Activated CD4-positive, alpha-beta memory T cell treated with anti-CD3 and anti-CD28 coated beads for 36 hours (primary cell): ENCODE measurements at regions of chr11 and their contacts with region 1.

Region 1: GRCh38 chr11:108467091-108467823 is at the start of gene C11orf65:
- DNase-seq: peak; percentile 97
- H3K4me3 Mint-ChIP-seq: peak within 1 kb of the TSS; percentile 99
- H3K27ac Mint-ChIP-seq: peak within 1 kb of the TSS; percentile 99
- H3K4me1 Mint-ChIP-seq: peaks cover 3% of the 10 kb centered on the region
- H3K27me3 Mint-ChIP-seq: no peaks in the 10 kb centered on the region
- total RNA-seq, gene C11orf65: 1.0 to 2.0 TPM

Region 2: GRCh38 chr11:107840129-107840484 is 627.1 kb before region 1 on chr11:
- CTCF ChIA-PET with region 1: no interaction called
- POLR2A ChIA-PET with region 1: no interaction called
- intact Hi-C with region 1: loop called (anchors 10 kb)
- DNase-seq: no peak
- H3K4me3 Mint-ChIP-seq: peak overlapping the region; percentile 53
- H3K27ac Mint-ChIP-seq: peak overlapping the region; percentile 98
- H3K4me1 Mint-ChIP-seq: peaks cover 71% of the 10 kb centered on the region
- H3K27me3 Mint-ChIP-seq: no peaks in the 10 kb centered on the region

Region 3: GRCh38 chr11:107998761-107999160 is 468.5 kb before region 1 on chr11:
- CTCF ChIA-PET with region 1: no interaction called
- POLR2A ChIA-PET with region 1: no interaction called
- intact Hi-C with region 1: no loop called
- DNase-seq: no peak
- H3K4me3 Mint-ChIP-seq: no peak overlapping the region
- H3K27ac Mint-ChIP-seq: no peak overlapping the region
- H3K4me1 Mint-ChIP-seq: no peaks in the 10 kb centered on the region
- H3K27me3 Mint-ChIP-seq: peaks cover 1% of the 10 kb centered on the region

Region 4: DNA sequence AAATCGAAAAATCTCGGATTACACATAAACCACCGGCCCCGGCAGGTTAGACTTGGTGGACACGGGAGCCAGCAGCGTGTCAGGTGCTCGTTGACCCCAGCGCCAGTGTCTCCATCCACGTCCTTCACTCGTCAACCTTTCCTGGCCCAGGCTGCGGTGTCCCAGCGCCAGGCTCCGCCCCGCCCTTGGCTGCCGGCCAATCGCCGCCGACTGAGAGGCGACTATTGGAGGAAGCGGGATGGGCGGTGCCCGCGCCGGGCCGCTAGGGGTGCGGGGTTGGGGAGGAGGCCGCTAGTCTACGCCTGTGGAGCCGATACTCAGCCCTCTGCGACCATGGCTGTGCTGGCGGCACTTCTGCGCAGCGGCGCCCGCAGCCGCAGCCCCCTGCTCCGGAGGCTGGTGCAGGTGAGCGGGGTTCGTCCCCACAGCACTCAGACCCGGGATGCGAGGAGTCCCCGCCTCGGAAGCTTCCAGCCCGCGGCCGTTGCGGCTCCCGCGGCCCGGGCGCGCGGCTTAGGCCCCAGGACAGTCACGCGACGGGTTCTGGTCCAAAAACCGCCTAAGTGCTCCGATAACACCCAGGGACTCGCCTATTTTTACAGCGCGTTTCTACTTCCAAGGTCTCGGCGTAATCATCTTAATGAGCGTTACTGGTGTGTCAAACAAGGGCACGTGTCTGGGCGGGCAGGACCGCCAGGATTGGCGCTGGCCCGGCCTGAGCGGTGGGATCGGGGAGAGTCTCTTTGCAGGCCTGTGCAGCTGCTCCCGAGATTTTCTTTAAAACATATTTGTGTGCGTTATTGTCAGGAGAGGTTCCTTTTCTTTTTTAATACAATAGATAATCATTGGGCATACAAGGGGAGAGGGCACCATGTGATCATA is 345.7 kb before region 1 on chr11 and contains the start of gene ACAT1:
- CTCF ChIA-PET with region 1: no interaction called
- POLR2A ChIA-PET with region 1: interaction called, 3 read pairs
- intact Hi-C with region 1: loop called (anchors 1 kb)
- DNase-seq: peak; percentile 98
- H3K4me3 Mint-ChIP-seq: peak within 1 kb of the TSS; percentile 87
- H3K27ac Mint-ChIP-seq: peak within 1 kb of the TSS; percentile 67
- H3K4me1 Mint-ChIP-seq: peaks cover 38% of the 10 kb centered on the region
- H3K27me3 Mint-ChIP-seq: no peaks in the 10 kb centered on the region
- total RNA-seq, gene ACAT1: 58.3 to 64.9 TPM

Region 5: GRCh38 chr11:108237058-108237481 is 230.2 kb before region 1 on chr11:
- CTCF ChIA-PET with region 1: no interaction called
- POLR2A ChIA-PET with region 1: no interaction called
- intact Hi-C with region 1: loop called (anchors 1 kb)
- DNase-seq: no peak
- H3K4me3 Mint-ChIP-seq: peak overlapping the region; percentile 31
- H3K27ac Mint-ChIP-seq: peak overlapping the region; percentile 76
- H3K4me1 Mint-ChIP-seq: peaks cover 72% of the 10 kb centered on the region
- H3K27me3 Mint-ChIP-seq: no peaks in the 10 kb centered on the region

Region 6: DNA sequence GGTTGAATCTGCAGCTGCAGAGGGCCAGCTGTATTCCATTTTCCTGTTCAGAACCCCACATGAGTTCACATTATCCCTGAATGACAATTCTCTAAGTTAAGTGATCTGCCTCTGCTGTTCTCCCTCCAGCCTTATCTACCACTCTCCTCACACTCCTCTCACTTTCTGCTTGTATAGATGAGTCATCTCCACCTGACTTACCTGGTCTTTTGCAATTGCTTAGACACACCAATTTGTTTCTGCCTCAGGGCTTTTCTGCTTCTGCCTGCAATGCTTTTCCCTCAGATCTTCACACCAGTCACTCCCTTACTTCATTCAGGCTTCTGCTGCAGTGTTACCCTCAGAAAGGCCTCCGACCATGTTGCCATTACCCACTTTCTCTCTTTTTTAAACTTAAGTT is 126.3 kb before region 1 on chr11:
- CTCF ChIA-PET with region 1: no interaction called
- POLR2A ChIA-PET with region 1: no interaction called
- intact Hi-C with region 1: loop called (anchors 10 kb)
- DNase-seq: no peak
- H3K4me3 Mint-ChIP-seq: no peak overlapping the region
- H3K27ac Mint-ChIP-seq: no peak overlapping the region
- H3K4me1 Mint-ChIP-seq: peaks cover 27% of the 10 kb centered on the region
- H3K27me3 Mint-ChIP-seq: no peaks in the 10 kb centered on the region

Region 7: GRCh38 chr11:108593214-108593922 is 126.1 kb after region 1 on chr11 and contains the start of gene EXPH5:
- CTCF ChIA-PET with region 1: no interaction called
- POLR2A ChIA-PET with region 1: no interaction called
- intact Hi-C with region 1: loop called (anchors 1 kb)
- DNase-seq: peak; percentile 93
- H3K4me3 Mint-ChIP-seq: peak within 1 kb of the TSS; percentile 87
- H3K27ac Mint-ChIP-seq: peak within 1 kb of the TSS; percentile 68
- H3K4me1 Mint-ChIP-seq: peaks cover 17% of the 10 kb centered on the region
- H3K27me3 Mint-ChIP-seq: peaks cover 11% of the 10 kb centered on the region
- total RNA-seq, gene EXPH5: 1.4 to 1.8 TPM

Region 8: GRCh38 chr11:108647701-108648527 is 180.7 kb after region 1 on chr11:
- CTCF ChIA-PET with region 1: no interaction called
- POLR2A ChIA-PET with region 1: no interaction called
- intact Hi-C with region 1: loop called (anchors 5 kb)
- DNase-seq: peak; percentile 76
- H3K4me3 Mint-ChIP-seq: no peak overlapping the region
- H3K27ac Mint-ChIP-seq: no peak overlapping the region
- H3K4me1 Mint-ChIP-seq: no peaks in the 10 kb centered on the region
- H3K27me3 Mint-ChIP-seq: no peaks in the 10 kb centered on the region